Activated naive CD4-positive, alpha-beta T cell treated with anti-CD3 and anti-CD28 coated beads for 36 hours (primary cell): ENCODE measurements at regions of chr1 and their contacts with region 1.

Region 1: GRCh38 chr1:185566995-185567394 is 167.2 kb upstream of the HMCN1 start:
- DNase-seq: peak; percentile 57
- H3K4me3 Mint-ChIP-seq: no peak overlapping the region
- H3K27ac Mint-ChIP-seq: peak overlapping the region; percentile 70
- H3K4me1 Mint-ChIP-seq: peaks cover 68% of the 10 kb centered on the region
- H3K27me3 Mint-ChIP-seq: no peaks in the 10 kb centered on the region

Region 2: GRCh38 chr1:185311589-185312225 is 255.3 kb before region 1 on chr1:
- CTCF ChIA-PET with region 1: no interaction called
- intact Hi-C with region 1: no loop called
- DNase-seq: no peak
- H3K4me3 Mint-ChIP-seq: no peak overlapping the region
- H3K27ac Mint-ChIP-seq: no peak overlapping the region
- H3K4me1 Mint-ChIP-seq: peaks cover 38% of the 10 kb centered on the region
- H3K27me3 Mint-ChIP-seq: no peaks in the 10 kb centered on the region

Region 3: DNA sequence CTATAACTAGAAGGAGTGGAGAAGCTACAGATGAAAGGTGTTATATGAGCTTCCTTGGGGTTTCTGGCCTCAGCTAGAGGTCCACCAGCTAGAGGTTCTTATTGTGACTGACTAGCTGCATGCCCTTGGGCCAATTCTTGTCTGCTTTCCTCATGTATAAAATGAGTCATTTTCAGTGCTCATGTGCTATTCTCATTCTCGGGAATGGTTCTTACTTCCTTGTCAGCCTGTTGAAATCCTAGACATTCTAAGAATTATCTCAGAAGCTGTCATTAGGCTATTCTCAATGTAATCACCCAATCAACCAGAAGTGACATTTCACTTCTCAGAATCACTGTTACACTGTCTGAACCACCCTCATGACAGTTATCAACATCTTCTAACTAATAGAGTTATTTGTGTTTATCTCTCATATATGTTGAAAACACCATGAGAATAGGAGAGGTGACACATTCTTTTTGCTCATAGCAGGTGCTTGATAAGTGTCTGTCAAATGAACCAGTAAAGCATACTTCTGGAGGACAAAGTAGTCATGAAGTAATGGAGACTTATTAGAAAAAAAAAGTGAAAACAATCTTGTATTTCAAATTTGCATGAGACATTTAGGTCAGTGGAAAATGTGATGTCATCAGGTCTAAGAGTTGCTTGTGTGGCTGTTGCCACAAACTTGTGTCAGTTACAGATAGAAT is 127.1 kb before region 1 on chr1:
- CTCF ChIA-PET with region 1: no interaction called
- intact Hi-C with region 1: loop called (anchors 1 kb)
- DNase-seq: peak; percentile 31
- H3K4me3 Mint-ChIP-seq: no peak overlapping the region
- H3K27ac Mint-ChIP-seq: no peak overlapping the region
- H3K4me1 Mint-ChIP-seq: peaks cover 2% of the 10 kb centered on the region
- H3K27me3 Mint-ChIP-seq: no peaks in the 10 kb centered on the region

Region 4: DNA sequence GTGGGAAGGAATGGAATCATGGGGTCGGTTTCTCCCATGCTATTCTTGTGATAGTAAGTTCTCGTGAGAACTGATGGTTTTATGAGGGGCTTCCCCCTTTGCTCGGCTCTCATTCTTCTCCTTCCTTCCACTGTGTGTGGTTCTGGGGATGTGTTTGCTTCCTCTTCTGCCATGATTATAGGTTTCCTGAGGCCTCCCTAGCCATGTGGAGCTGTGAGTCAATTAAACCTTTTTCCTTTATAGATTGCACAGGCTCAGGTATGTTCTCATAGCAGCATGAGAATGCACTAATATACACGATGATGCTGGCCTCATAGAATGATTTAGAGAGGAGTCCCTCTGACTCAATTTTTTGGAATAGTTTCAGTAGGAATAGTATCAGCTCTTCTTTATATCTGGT is 54.6 kb before region 1 on chr1:
- CTCF ChIA-PET with region 1: no interaction called
- intact Hi-C with region 1: no loop called
- DNase-seq: no peak
- H3K4me3 Mint-ChIP-seq: no peak overlapping the region
- H3K27ac Mint-ChIP-seq: no peak overlapping the region
- H3K4me1 Mint-ChIP-seq: no peaks in the 10 kb centered on the region
- H3K27me3 Mint-ChIP-seq: no peaks in the 10 kb centered on the region

Region 5: DNA sequence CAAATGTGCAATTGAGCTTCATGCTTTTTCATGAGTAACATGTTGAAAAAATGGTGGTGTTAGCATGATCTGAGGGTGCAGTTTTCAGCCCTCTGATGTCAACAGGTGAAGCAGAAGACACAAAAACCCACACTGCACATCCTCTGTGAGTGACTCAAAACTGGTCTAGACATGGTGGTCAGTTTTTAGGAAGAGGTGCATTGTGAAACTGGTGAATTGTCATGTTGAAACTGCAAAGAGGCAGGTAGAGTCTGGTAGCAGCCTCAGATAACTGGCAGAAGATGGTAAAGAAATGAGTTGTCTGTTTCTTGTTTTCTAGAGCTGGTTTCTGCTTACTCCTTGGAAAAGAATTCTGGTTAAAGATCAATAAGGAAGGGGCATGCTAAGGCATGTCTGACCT is 69.9 kb after region 1 on chr1:
- CTCF ChIA-PET with region 1: no interaction called
- intact Hi-C with region 1: loop called (anchors 1 kb)
- DNase-seq: peak; percentile 55
- H3K4me3 Mint-ChIP-seq: no peak overlapping the region
- H3K27ac Mint-ChIP-seq: peak overlapping the region; percentile 40
- H3K4me1 Mint-ChIP-seq: peaks cover 12% of the 10 kb centered on the region
- H3K27me3 Mint-ChIP-seq: peaks cover 6% of the 10 kb centered on the region

Region 6: DNA sequence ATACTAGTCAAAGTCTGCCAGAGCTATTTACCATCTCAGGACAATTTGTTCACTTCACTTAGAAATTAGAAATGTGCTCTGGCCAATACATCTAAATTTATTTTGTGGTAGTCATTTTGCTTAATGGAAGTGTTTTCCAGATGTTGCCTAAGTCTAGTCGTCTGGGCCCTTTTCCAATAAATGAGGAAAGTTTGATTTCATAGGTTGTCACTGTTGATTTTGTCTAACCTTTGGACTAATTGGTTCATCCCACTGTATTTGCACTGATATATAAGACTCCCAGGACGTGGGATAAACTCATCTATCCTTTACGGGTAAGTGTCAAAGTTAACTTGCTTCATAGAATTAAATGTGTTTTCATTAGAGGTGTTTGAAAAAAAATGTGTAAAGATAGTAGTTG is 729.0 kb after region 1 on chr1:
- CTCF ChIA-PET with region 1: no interaction called
- intact Hi-C with region 1: loop called (anchors 5 kb)
- DNase-seq: no peak
- H3K4me3 Mint-ChIP-seq: peak within 1 kb of the TSS; percentile 42
- H3K27ac Mint-ChIP-seq: peak within 1 kb of the TSS; percentile 99
- H3K4me1 Mint-ChIP-seq: peaks cover 69% of the 10 kb centered on the region
- H3K27me3 Mint-ChIP-seq: no peaks in the 10 kb centered on the region